Naive thymus-derived CD4-positive, alpha-beta T cell (primary cell): ENCODE measurements at regions of chr17 and their contacts with region 1.

Region 1: GRCh38 chr17:77666881-77667395 is 291.6 kb upstream of the TNRC6C start:
- DNase-seq: peak; percentile 37 to 87 (median 83)
- ATAC-seq: peak; percentile 90
- H3K4me3 ChIP-seq: peak overlapping the region; percentile 55
- H3K4me3 Mint-ChIP-seq: peak overlapping the region; percentile 80 to 97 (median 93)
- H3K27ac ChIP-seq: peak overlapping the region; percentile 75
- H3K27ac Mint-ChIP-seq: peak overlapping the region; percentile 96 to 99 (median 98)
- H3K4me1 ChIP-seq: peaks cover 26 to 40% of the 10 kb centered on the region in 2 donors
- H3K4me1 Mint-ChIP-seq: peaks cover 37 to 74% (median 64%) of the 10 kb centered on the region in 7 donors
- H3K27me3 ChIP-seq: no peaks in the 10 kb centered on the region
- H3K27me3 Mint-ChIP-seq: no peaks in the 10 kb centered on the region

Region 2: DNA sequence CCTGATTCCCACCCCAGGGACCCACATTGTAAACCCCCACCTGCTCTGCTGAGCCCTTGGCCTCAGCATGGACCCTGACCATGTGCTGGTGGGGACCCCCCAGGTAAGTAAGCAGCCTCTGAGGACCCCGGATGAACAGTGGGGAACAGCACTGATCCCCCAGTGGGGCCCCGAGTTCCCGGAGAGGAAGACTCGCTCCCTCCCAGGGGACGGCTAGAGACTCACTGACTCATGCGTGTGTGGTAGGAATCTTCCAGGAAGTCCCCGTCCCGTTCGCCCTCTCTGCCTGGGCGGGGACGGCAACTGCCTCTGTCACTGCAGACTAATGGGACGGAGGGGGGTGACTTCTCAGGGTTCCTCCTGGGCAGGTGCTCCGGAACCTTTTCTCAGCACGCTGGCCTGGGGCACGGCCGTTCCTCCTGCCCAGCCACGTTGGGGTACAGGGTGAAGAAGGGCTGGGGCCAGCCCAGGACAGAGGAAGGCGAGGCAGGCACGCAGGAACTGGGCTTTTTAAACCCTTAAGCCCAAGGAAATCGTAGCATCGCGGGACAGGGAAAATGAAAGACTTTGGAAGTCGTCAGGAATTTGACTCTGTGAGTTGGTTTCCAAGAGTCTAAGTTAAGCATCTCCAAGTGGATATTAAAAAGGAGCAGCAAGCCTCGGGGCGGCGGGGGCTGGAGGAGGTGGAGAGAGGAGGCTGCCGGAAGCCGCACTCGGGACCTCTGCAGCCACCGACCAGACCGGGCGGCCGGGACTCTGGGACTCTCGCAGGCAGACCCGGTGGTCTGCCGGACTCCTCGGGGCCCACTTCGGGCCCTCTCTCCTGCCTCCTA is 347.5 kb before region 1 on chr17:
- CTCF ChIA-PET with region 1: no interaction called
- POLR2A ChIA-PET with region 1: no interaction called
- intact Hi-C with region 1: no loop called
- DNase-seq: peak in 5 of 9 donors; percentile 31 to 68 (median 33)
- ATAC-seq: peak; percentile 88
- H3K4me3 ChIP-seq: peak overlapping the region; percentile 23
- H3K4me3 Mint-ChIP-seq: peak overlapping the region; percentile 78 to 92 (median 82)
- H3K27ac ChIP-seq: peak overlapping the region; percentile 41
- H3K27ac Mint-ChIP-seq: peak overlapping the region; percentile 63 to 93 (median 83)
- H3K4me1 ChIP-seq: peaks cover 20 to 36% of the 10 kb centered on the region in 2 donors
- H3K4me1 Mint-ChIP-seq: peaks cover 21 to 42% (median 35%) of the 10 kb centered on the region in 7 donors
- H3K27me3 ChIP-seq: no peaks in the 10 kb centered on the region
- H3K27me3 Mint-ChIP-seq: no peaks in the 10 kb centered on the region

Region 3: GRCh38 chr17:77542551-77543490 is 124.1 kb before region 1 on chr17:
- CTCF ChIA-PET with region 1: interaction called, 5 read pairs
- POLR2A ChIA-PET with region 1: interaction called, 5 read pairs
- intact Hi-C with region 1: loop called in 1 of 2 experiments (anchors 1 kb)
- DNase-seq: peak; percentile 32 to 72 (median 62)
- ATAC-seq: peak; percentile 87
- H3K4me3 ChIP-seq: no peak overlapping the region
- H3K4me3 Mint-ChIP-seq: no peak overlapping the region
- H3K27ac ChIP-seq: no peak overlapping the region
- H3K27ac Mint-ChIP-seq: no peak overlapping the region
- H3K4me1 ChIP-seq: peaks cover 0 to 5% of the 10 kb centered on the region in 2 donors
- H3K4me1 Mint-ChIP-seq: peaks cover 0 to 7% (median 0%) of the 10 kb centered on the region in 7 donors
- H3K27me3 ChIP-seq: no peaks in the 10 kb centered on the region
- H3K27me3 Mint-ChIP-seq: peaks cover 0 to 37% (median 5%) of the 10 kb centered on the region in 5 donors

Region 4: GRCh38 chr17:77634710-77635109 is 32.2 kb before region 1 on chr17:
- CTCF ChIA-PET with region 1: no interaction called
- POLR2A ChIA-PET with region 1: no interaction called
- intact Hi-C with region 1: loop called in 1 of 2 experiments (anchors 5 kb)
- DNase-seq: peak in 1 of 9 donors; percentile 60
- ATAC-seq: no peak
- H3K4me3 ChIP-seq: no peak overlapping the region
- H3K4me3 Mint-ChIP-seq: peak overlapping the region in 1 of 10 donors; percentile 20
- H3K27ac ChIP-seq: no peak overlapping the region
- H3K27ac Mint-ChIP-seq: peak overlapping the region in 2 of 9 donors; percentile 23 to 63
- H3K4me1 ChIP-seq: no peaks in the 10 kb centered on the region
- H3K4me1 Mint-ChIP-seq: peaks cover 0 to 15% (median 4%) of the 10 kb centered on the region in 7 donors
- H3K27me3 ChIP-seq: no peaks in the 10 kb centered on the region
- H3K27me3 Mint-ChIP-seq: peaks cover 0 to 6% (median 0%) of the 10 kb centered on the region in 5 donors

Region 5: GRCh38 chr17:77696721-77697460 is 30.0 kb after region 1 on chr17:
- CTCF ChIA-PET with region 1: no interaction called
- POLR2A ChIA-PET with region 1: interaction called, 4 read pairs
- intact Hi-C with region 1: loop called in 1 of 2 experiments (anchors 2 kb)
- DNase-seq: peak in 2 of 9 donors; percentile 5 to 12
- ATAC-seq: no peak
- H3K4me3 ChIP-seq: no peak overlapping the region
- H3K4me3 Mint-ChIP-seq: peak overlapping the region in 9 of 10 donors; percentile 41 to 77 (median 73)
- H3K27ac ChIP-seq: no peak overlapping the region
- H3K27ac Mint-ChIP-seq: peak overlapping the region in 5 of 9 donors; percentile 2 to 70 (median 34)
- H3K4me1 ChIP-seq: no peaks in the 10 kb centered on the region
- H3K4me1 Mint-ChIP-seq: peaks cover 7 to 37% (median 24%) of the 10 kb centered on the region in 7 donors
- H3K27me3 ChIP-seq: no peaks in the 10 kb centered on the region
- H3K27me3 Mint-ChIP-seq: peaks cover 0 to 40% (median 0%) of the 10 kb centered on the region in 5 donors

Region 6: GRCh38 chr17:78168242-78168902 is 501.4 kb after region 1 on chr17 and contains the start of gene SYNGR2:
- CTCF ChIA-PET with region 1: no interaction called
- POLR2A ChIA-PET with region 1: no interaction called
- intact Hi-C with region 1: loop called in 1 of 2 experiments (anchors 2 kb)
- DNase-seq: peak; percentile 80 to 94 (median 87)
- ATAC-seq: peak; percentile 91
- H3K4me3 ChIP-seq: peak within 1 kb of the TSS; percentile 58
- H3K4me3 Mint-ChIP-seq: peak within 1 kb of the TSS; percentile 64 to 83 (median 73)
- H3K27ac ChIP-seq: peak within 1 kb of the TSS; percentile 89
- H3K27ac Mint-ChIP-seq: peak within 1 kb of the TSS; percentile 31 to 88 (median 66)
- H3K4me1 ChIP-seq: peaks cover 6 to 25% of the 10 kb centered on the region in 2 donors
- H3K4me1 Mint-ChIP-seq: peaks cover 22 to 40% (median 35%) of the 10 kb centered on the region in 7 donors
- H3K27me3 ChIP-seq: no peaks in the 10 kb centered on the region
- H3K27me3 Mint-ChIP-seq: no peaks in the 10 kb centered on the region
- total RNA-seq, gene SYNGR2: 47.6 to 109 (median 58.6) TPM